CD4-positive, alpha-beta T cell (primary cell): ENCODE measurements at regions of chr6 and their contacts with region 1.

Region 1: DNA sequence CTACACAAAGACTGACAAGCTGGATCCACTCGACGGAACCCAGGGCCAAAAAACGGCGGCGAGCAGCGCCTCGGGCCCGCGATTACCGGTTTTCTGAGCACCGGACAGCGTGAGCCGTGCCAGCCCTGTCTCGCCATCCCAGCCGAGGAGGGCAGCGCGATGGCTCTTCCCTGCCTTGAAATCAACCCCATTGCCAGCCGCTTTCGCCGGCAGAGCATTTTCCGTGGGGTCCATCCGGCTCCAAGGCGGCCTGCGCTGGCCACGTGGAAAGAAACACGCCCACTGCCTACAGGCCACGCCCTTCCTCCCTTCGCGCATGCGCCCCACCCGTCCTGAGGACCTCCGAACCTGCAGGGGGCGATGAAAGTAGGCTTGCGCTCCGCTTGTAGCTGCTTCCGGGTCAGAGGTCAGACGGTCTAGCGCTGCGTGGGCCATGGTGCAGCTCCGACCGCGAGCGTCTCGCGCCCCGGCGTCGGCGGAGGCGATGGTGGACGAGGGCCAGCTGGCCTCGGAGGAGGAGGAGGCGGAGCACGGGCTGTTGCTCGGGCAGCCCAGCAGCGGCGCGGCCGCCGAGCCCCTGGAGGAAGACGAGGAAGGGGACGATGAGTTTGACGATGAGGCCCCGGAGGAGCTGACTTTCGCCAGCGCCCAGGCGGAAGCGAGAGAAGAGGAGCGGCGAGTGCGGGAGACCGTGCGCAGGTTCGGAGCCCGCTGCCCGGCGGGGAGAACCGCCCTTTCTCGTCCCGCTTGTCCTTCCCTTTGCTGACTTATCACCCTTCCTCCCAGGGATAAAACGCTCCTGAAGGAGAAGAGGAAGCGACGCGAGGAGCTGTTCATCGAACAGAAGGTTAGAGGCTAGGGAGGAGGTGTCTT is at the start of gene NOL7:
- DNase-seq: peak; percentile 97 to 99 (median 98)
- ATAC-seq: peak; percentile 91
- H3K4me3 ChIP-seq: peak within 1 kb of the TSS; percentile 80
- H3K4me3 Mint-ChIP-seq: peak within 1 kb of the TSS; percentile 94
- H3K27ac ChIP-seq: peak within 1 kb of the TSS; percentile 75 to 85
- H3K27ac Mint-ChIP-seq: peak within 1 kb of the TSS; percentile 93
- H3K4me1 ChIP-seq: peaks cover 26% of the 10 kb centered on the region
- H3K4me1 Mint-ChIP-seq: peaks cover 50% of the 10 kb centered on the region
- H3K27me3 ChIP-seq: no peaks in the 10 kb centered on the region
- H3K27me3 Mint-ChIP-seq: no peaks in the 10 kb centered on the region
- CTCF ChIP-seq: peak; percentile 85
- total RNA-seq, gene NOL7: 65.5 to 67.6 TPM

Region 2: DNA sequence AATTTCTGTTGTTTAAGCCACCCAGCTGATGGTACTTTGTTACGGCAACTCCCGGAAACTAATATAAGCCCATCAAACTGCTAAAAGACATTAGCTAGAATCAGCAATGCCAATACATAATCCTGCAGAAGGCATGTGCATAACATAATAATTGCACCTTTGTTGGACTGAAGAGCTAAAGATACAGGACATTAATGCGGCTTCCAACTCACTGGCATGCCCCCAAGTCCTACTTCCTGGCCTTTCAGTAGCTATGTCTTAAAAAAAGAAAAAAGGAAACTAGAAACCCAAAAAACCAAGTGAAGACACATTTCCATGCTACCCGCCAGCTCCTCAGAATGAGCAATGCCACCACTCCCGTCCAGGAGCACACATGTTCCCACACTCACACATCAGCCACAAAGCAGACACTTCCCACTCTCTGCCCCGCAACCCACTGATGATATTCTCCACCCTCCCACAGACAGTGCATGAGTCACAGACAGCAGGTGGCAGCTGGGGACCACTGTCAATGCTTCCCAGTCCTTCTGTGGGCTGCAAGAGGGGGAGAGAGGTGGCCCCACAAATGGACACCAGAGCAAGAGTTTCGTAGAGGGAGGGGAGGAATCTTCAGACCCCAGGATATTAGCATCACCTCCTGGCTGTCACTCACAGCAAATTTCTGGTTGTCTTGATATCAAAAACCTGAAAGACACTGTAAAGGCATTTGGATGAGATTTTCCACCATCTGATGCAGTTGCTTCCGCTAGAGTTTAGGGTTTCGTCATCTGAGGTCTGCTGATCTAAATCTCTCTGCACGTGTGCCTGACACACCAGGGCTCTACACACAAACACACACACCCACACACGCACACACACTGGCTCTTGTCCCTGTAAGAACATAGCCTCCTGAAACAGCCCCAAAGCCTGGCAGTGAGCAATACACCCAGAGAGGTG is 160.6 kb before region 1 on chr6:
- CTCF ChIA-PET with region 1: no interaction called
- POLR2A ChIA-PET with region 1: no interaction called
- intact Hi-C with region 1: loop called in 1 of 2 experiments (anchors 5 kb)
- DNase-seq: peak; percentile 25 to 86 (median 58)
- ATAC-seq: peak; percentile 81
- H3K4me3 ChIP-seq: peak overlapping the region; percentile 12
- H3K4me3 Mint-ChIP-seq: peak overlapping the region; percentile 60
- H3K27ac ChIP-seq: peak overlapping the region; percentile 1 to 6
- H3K27ac Mint-ChIP-seq: peak overlapping the region; percentile 88
- H3K4me1 ChIP-seq: peaks cover 21% of the 10 kb centered on the region
- H3K4me1 Mint-ChIP-seq: peaks cover 27% of the 10 kb centered on the region
- H3K27me3 ChIP-seq: no peaks in the 10 kb centered on the region
- H3K27me3 Mint-ChIP-seq: no peaks in the 10 kb centered on the region
- CTCF ChIP-seq: peak; percentile 57

Region 3: GRCh38 chr6:13630499-13630898 is 15.3 kb after region 1 on chr6:
- CTCF ChIA-PET with region 1: interaction called, 10 read pairs
- POLR2A ChIA-PET with region 1: interaction called, 22 read pairs
- intact Hi-C with region 1: no loop called
- DNase-seq: no peak
- ATAC-seq: no peak
- H3K4me3 ChIP-seq: no peak overlapping the region
- H3K4me3 Mint-ChIP-seq: no peak overlapping the region
- H3K27ac ChIP-seq: no peak overlapping the region
- H3K27ac Mint-ChIP-seq: no peak overlapping the region
- H3K4me1 ChIP-seq: no peaks in the 10 kb centered on the region
- H3K4me1 Mint-ChIP-seq: peaks cover 16% of the 10 kb centered on the region
- H3K27me3 ChIP-seq: no peaks in the 10 kb centered on the region
- H3K27me3 Mint-ChIP-seq: no peaks in the 10 kb centered on the region
- CTCF ChIP-seq: no peak

Region 4: GRCh38 chr6:13681305-13682061 is 66.3 kb after region 1 on chr6:
- CTCF ChIA-PET with region 1: interaction called, 5 read pairs
- POLR2A ChIA-PET with region 1: interaction called, 24 read pairs
- intact Hi-C with region 1: no loop called
- DNase-seq: peak in 4 of 14 experiments; percentile 18 to 82 (median 74)
- ATAC-seq: peak; percentile 81
- H3K4me3 ChIP-seq: peak overlapping the region; percentile 22
- H3K4me3 Mint-ChIP-seq: peak overlapping the region; percentile 50
- H3K27ac ChIP-seq: peak overlapping the region; percentile 21 to 62
- H3K27ac Mint-ChIP-seq: peak overlapping the region; percentile 83
- H3K4me1 ChIP-seq: peaks cover 35% of the 10 kb centered on the region
- H3K4me1 Mint-ChIP-seq: peaks cover 65% of the 10 kb centered on the region
- H3K27me3 ChIP-seq: no peaks in the 10 kb centered on the region
- H3K27me3 Mint-ChIP-seq: no peaks in the 10 kb centered on the region
- CTCF ChIP-seq: no peak

Region 5: DNA sequence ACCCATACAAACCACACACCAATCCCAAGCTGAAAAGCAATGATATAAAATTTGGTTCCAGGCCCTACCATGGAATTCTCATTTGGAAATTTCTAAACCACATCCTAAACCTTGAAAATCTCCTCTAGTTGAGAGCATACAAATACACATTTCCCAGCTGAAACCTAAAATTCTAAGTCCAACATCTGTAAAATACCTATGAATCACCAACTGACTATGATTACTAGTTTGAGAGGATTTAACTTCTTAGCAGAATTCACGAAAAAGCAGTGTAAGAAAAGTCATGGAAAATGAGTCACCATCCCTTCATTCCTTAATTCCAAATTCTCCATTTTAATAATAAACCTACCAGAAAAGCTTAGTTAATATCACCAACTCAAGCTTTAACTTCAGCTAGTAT is 81.1 kb after region 1 on chr6:
- CTCF ChIA-PET with region 1: interaction called, 11 read pairs
- POLR2A ChIA-PET with region 1: interaction called, 17 read pairs
- intact Hi-C with region 1: no loop called
- DNase-seq: no peak
- ATAC-seq: no peak
- H3K4me3 ChIP-seq: no peak overlapping the region
- H3K4me3 Mint-ChIP-seq: no peak overlapping the region
- H3K27ac ChIP-seq: peak overlapping the region; percentile 1 to 57
- H3K27ac Mint-ChIP-seq: peak overlapping the region; percentile 91
- H3K4me1 ChIP-seq: peaks cover 23% of the 10 kb centered on the region
- H3K4me1 Mint-ChIP-seq: peaks cover 71% of the 10 kb centered on the region
- H3K27me3 ChIP-seq: no peaks in the 10 kb centered on the region
- H3K27me3 Mint-ChIP-seq: no peaks in the 10 kb centered on the region
- CTCF ChIP-seq: no peak

Region 6: GRCh38 chr6:13767121-13767808 is 152.1 kb after region 1 on chr6:
- CTCF ChIA-PET with region 1: interaction called, 8 read pairs
- POLR2A ChIA-PET with region 1: interaction called, 4 read pairs
- intact Hi-C with region 1: loop called in 1 of 2 experiments (anchors 5 kb)
- DNase-seq: peak; percentile 12 to 67 (median 38)
- ATAC-seq: peak; percentile 51
- H3K4me3 ChIP-seq: peak overlapping the region; percentile 24
- H3K4me3 Mint-ChIP-seq: peak overlapping the region; percentile 44
- H3K27ac ChIP-seq: no peak overlapping the region
- H3K27ac Mint-ChIP-seq: no peak overlapping the region
- H3K4me1 ChIP-seq: peaks cover 26% of the 10 kb centered on the region
- H3K4me1 Mint-ChIP-seq: peaks cover 38% of the 10 kb centered on the region
- H3K27me3 ChIP-seq: no peaks in the 10 kb centered on the region
- H3K27me3 Mint-ChIP-seq: no peaks in the 10 kb centered on the region
- CTCF ChIP-seq: peak; percentile 55

Region 7: GRCh38 chr6:14117158-14118090 is 502.3 kb after region 1 on chr6 and contains the start of gene CD83:
- CTCF ChIA-PET with region 1: no interaction called
- POLR2A ChIA-PET with region 1: no interaction called
- intact Hi-C with region 1: loop called in 1 of 2 experiments (anchors 10 kb)
- DNase-seq: peak; percentile 65 to 97 (median 82)
- ATAC-seq: peak; percentile 96
- H3K4me3 ChIP-seq: peak within 1 kb of the TSS; percentile 98
- H3K4me3 Mint-ChIP-seq: peak within 1 kb of the TSS; percentile 96
- H3K27ac ChIP-seq: peak within 1 kb of the TSS; percentile 64 to 76
- H3K27ac Mint-ChIP-seq: peak within 1 kb of the TSS; percentile 94
- H3K4me1 ChIP-seq: peaks cover 19% of the 10 kb centered on the region
- H3K4me1 Mint-ChIP-seq: peaks cover 48% of the 10 kb centered on the region
- H3K27me3 ChIP-seq: no peaks in the 10 kb centered on the region
- H3K27me3 Mint-ChIP-seq: no peaks in the 10 kb centered on the region
- CTCF ChIP-seq: no peak
- total RNA-seq, gene CD83: 35.3 to 36.4 TPM

Region 8: GRCh38 chr6:14903176-14904038 is 1288.2 kb after region 1 on chr6:
- CTCF ChIA-PET with region 1: no interaction called
- POLR2A ChIA-PET with region 1: no interaction called
- intact Hi-C with region 1: no loop called
- DNase-seq: no peak
- ATAC-seq: no peak
- H3K4me3 ChIP-seq: no peak overlapping the region
- H3K4me3 Mint-ChIP-seq: no peak overlapping the region
- H3K27ac ChIP-seq: no peak overlapping the region
- H3K27ac Mint-ChIP-seq: no peak overlapping the region
- H3K4me1 ChIP-seq: no peaks in the 10 kb centered on the region
- H3K4me1 Mint-ChIP-seq: no peaks in the 10 kb centered on the region
- H3K27me3 ChIP-seq: no peaks in the 10 kb centered on the region
- H3K27me3 Mint-ChIP-seq: no peaks in the 10 kb centered on the region
- CTCF ChIP-seq: no peak